ENCODE measurements at regions of chrX and their contacts with region 1.

Region 1: GRCh38 chrX:13123857-13124345 is 79.5 kb upstream of the FAM9C start:
- DNase-seq: peak; percentile 93
- H3K4me3 ChIP-seq: no peak overlapping the region
- H3K27ac ChIP-seq: peak overlapping the region; percentile 91
- H3K4me1 ChIP-seq: peaks cover 59% of the 10 kb centered on the region
- H3K27me3 ChIP-seq: no peaks in the 10 kb centered on the region
- CTCF ChIP-seq: no peak
- POLR2A ChIP-seq: peak; percentile 45

Region 2: DNA sequence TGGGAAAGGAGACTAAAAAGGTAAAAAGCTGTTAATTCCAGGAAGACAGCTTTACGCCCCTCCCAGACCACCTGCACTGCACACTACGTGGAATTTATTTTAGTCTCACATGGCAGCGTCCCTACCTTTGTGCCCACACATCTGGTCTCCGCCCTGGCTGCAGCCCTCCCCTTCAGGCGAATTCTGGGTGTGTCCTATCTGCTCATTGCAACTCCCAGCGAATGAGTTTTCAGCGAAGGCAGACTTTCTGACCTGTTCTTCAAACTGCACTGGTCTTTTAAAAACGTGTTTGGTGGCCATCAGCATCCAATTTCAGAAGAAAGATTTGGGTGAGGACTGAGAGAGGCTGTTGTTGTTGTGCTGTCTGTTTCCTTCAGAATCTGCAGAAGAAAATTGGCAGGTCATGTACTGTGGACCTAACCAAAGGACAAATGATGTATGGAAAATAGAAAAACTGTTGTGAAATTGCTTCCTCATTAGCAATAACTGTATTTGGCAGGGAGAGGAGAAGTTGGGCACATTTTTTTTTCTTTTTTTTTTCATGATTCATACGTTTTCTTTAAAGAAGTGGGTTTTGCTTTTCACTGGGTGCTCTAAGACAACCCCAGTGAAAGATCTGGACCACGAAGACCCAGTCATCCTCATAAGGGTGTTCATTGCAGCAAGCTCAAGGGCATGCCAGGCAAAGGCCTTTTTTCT is 213.3 kb before region 1 on chrX:
- CTCF ChIA-PET with region 1: no interaction called
- POLR2A ChIA-PET with region 1: no interaction called
- dilution Hi-C with region 1: no loop called
- intact Hi-C with region 1: no loop called
- DNase-seq: no peak
- H3K4me3 ChIP-seq: no peak overlapping the region
- H3K27ac ChIP-seq: no peak overlapping the region
- H3K4me1 ChIP-seq: no peaks in the 10 kb centered on the region
- H3K27me3 ChIP-seq: no peaks in the 10 kb centered on the region
- CTCF ChIP-seq: no peak
- POLR2A ChIP-seq: no peak

Region 3: GRCh38 chrX:13110433-13111324 is 13.2 kb before region 1 on chrX:
- CTCF ChIA-PET with region 1: interaction called, 3 read pairs
- POLR2A ChIA-PET with region 1: no interaction called
- dilution Hi-C with region 1: no loop called
- intact Hi-C with region 1: loop called (anchors 1 kb)
- DNase-seq: peak; percentile 89
- H3K4me3 ChIP-seq: no peak overlapping the region
- H3K27ac ChIP-seq: peak overlapping the region; percentile 64
- H3K4me1 ChIP-seq: peaks cover 14% of the 10 kb centered on the region
- H3K27me3 ChIP-seq: no peaks in the 10 kb centered on the region
- CTCF ChIP-seq: no peak
- POLR2A ChIP-seq: no peak

Region 4: GRCh38 chrX:13203271-13203670 is 79.4 kb after region 1 on chrX:
- CTCF ChIA-PET with region 1: no interaction called
- POLR2A ChIA-PET with region 1: no interaction called
- dilution Hi-C with region 1: no loop called
- intact Hi-C with region 1: no loop called
- DNase-seq: peak; percentile 49
- H3K4me3 ChIP-seq: no peak overlapping the region
- H3K27ac ChIP-seq: no peak overlapping the region
- H3K4me1 ChIP-seq: peaks cover 7% of the 10 kb centered on the region
- H3K27me3 ChIP-seq: no peaks in the 10 kb centered on the region
- CTCF ChIP-seq: no peak
- POLR2A ChIP-seq: no peak

Region 5: GRCh38 chrX:13223868-13224555 is 100.1 kb after region 1 on chrX:
- CTCF ChIA-PET with region 1: interaction called, 9 read pairs
- POLR2A ChIA-PET with region 1: no interaction called
- dilution Hi-C with region 1: no loop called
- intact Hi-C with region 1: loop called (anchors 1 kb)
- DNase-seq: peak; percentile 91
- H3K4me3 ChIP-seq: no peak overlapping the region
- H3K27ac ChIP-seq: peak overlapping the region; percentile 87
- H3K4me1 ChIP-seq: peaks cover 16% of the 10 kb centered on the region
- H3K27me3 ChIP-seq: no peaks in the 10 kb centered on the region
- CTCF ChIP-seq: peak in 1 of 2 donors; percentile 14
- POLR2A ChIP-seq: no peak

Region 6: GRCh38 chrX:13750204-13750603 is 626.3 kb after region 1 on chrX:
- CTCF ChIA-PET with region 1: no interaction called
- POLR2A ChIA-PET with region 1: no interaction called
- dilution Hi-C with region 1: no loop called
- intact Hi-C with region 1: no loop called
- DNase-seq: peak; percentile 35
- H3K4me3 ChIP-seq: no peak overlapping the region
- H3K27ac ChIP-seq: no peak overlapping the region
- H3K4me1 ChIP-seq: no peaks in the 10 kb centered on the region
- H3K27me3 ChIP-seq: no peaks in the 10 kb centered on the region
- CTCF ChIP-seq: peak; percentile 22 to 31
- POLR2A ChIP-seq: no peak